Ovary (tissue), 10 donors: ENCODE measurements at regions of chr18 and their contacts with region 1.

Region 1: DNA sequence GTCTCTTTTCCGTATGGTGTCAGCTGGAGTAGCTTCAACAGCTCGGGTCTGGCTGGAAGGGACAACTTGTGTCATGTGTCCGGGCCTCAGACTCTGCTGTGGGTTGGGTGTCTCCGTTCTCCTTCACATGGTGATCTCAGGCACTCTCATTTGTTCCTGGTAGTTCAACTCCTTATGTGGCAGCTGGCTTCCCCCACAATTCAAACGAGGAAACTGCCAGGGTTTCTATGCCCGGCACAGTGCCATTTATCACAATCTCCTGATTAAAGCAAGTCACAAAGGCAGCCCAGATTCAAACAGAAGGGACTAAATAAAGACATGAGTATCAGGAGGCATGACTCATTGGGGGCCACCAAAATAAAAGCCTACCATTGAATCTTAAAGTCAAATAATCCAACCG is 22.7 kb downstream of the MRO start:
- DNase-seq: no peak
- H3K4me3 ChIP-seq: no peak overlapping the region
- H3K27ac ChIP-seq: no peak overlapping the region
- H3K4me1 ChIP-seq: no peaks in the 10 kb centered on the region
- H3K27me3 ChIP-seq: no peaks in the 10 kb centered on the region
- CTCF ChIP-seq: no peak
- EP300 ChIP-seq: no peak
- POLR2A ChIP-seq: no peak

Region 2: GRCh38 chr18:50662177-50662576 is 135.0 kb before region 1 on chr18:
- intact Hi-C with region 1: no loop called
- DNase-seq: no peak
- H3K4me3 ChIP-seq: no peak overlapping the region
- H3K27ac ChIP-seq: no peak overlapping the region
- H3K4me1 ChIP-seq: no peaks in the 10 kb centered on the region
- H3K27me3 ChIP-seq: no peaks in the 10 kb centered on the region
- CTCF ChIP-seq: no peak
- EP300 ChIP-seq: no peak
- POLR2A ChIP-seq: no peak

Region 3: GRCh38 chr18:50812834-50813233 is 15.7 kb after region 1 on chr18:
- intact Hi-C with region 1: loop called in 1 of 4 experiments (anchors 1 kb)
- DNase-seq: no peak
- H3K4me3 ChIP-seq: no peak overlapping the region
- H3K27ac ChIP-seq: no peak overlapping the region
- H3K4me1 ChIP-seq: peaks cover 2% of the 10 kb centered on the region
- H3K27me3 ChIP-seq: no peaks in the 10 kb centered on the region
- CTCF ChIP-seq: no peak
- EP300 ChIP-seq: no peak
- POLR2A ChIP-seq: no peak

Region 4: GRCh38 chr18:50866765-50867164 is 69.6 kb after region 1 on chr18:
- intact Hi-C with region 1: no loop called
- DNase-seq: no peak
- H3K4me3 ChIP-seq: no peak overlapping the region
- H3K27ac ChIP-seq: no peak overlapping the region
- H3K4me1 ChIP-seq: no peaks in the 10 kb centered on the region
- H3K27me3 ChIP-seq: no peaks in the 10 kb centered on the region
- CTCF ChIP-seq: no peak
- EP300 ChIP-seq: no peak
- POLR2A ChIP-seq: no peak

Region 5: GRCh38 chr18:50917021-50917420 is 119.9 kb after region 1 on chr18:
- intact Hi-C with region 1: no loop called
- DNase-seq: no peak
- H3K4me3 ChIP-seq: no peak overlapping the region
- H3K27ac ChIP-seq: no peak overlapping the region
- H3K4me1 ChIP-seq: no peaks in the 10 kb centered on the region
- H3K27me3 ChIP-seq: no peaks in the 10 kb centered on the region
- CTCF ChIP-seq: no peak
- EP300 ChIP-seq: no peak
- POLR2A ChIP-seq: no peak